ENCODE measurements at regions of chr10 and their contacts with region 1.

Region 1: GRCh38 chr10:7471720-7472367 is 61.0 kb upstream of the SFMBT2 start:
- DNase-seq: peak; percentile 99
- H3K4me3 ChIP-seq: peak overlapping the region; percentile 55
- H3K27ac ChIP-seq: peak overlapping the region; percentile 91
- H3K4me1 ChIP-seq: peaks cover 75% of the 10 kb centered on the region
- CTCF ChIP-seq: no peak

Region 2: DNA sequence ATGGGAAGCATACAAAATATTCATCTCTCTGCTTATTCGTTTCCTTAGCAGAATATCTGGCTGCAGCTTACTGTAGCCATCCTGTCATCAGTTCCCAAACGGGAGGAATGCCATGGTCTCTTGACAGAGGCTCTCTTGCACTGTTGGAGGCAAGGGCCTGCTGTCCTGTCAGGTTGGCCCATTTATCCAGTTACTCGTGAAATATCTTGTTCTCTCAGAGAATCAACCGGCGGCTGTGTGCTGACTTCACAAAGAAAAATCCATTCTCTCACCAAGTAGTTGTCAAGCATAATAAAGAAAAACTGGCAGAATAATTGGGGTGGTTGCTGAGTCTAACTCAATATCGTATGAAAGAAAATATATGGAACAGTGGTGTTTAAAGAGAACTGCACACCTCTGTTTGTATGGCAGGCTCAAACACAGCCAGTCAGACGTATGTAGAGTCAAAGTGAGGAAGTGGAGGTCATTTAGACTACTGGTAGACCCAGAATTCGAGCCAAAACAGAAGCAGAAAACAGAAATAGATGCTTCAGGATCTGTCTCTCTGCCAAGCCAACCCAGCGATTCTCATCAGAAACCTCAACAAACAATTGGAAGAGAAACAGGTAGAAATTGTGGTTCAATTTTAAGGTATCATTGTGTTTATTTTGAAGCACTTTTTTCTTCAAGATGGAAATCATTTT is 542.6 kb before region 1 on chr10:
- CTCF ChIA-PET with region 1: no interaction called
- POLR2A ChIA-PET with region 1: interaction called, 3 read pairs
- intact Hi-C with region 1: loop called (anchors 5 kb)
- DNase-seq: peak; percentile 63
- H3K4me3 ChIP-seq: peak overlapping the region; percentile 53
- H3K27ac ChIP-seq: peak overlapping the region; percentile 96
- H3K4me1 ChIP-seq: peaks cover 57% of the 10 kb centered on the region
- CTCF ChIP-seq: no peak

Region 3: GRCh38 chr10:6980353-6980752 is 491.5 kb before region 1 on chr10:
- CTCF ChIA-PET with region 1: no interaction called
- POLR2A ChIA-PET with region 1: no interaction called
- intact Hi-C with region 1: no loop called
- DNase-seq: peak; percentile 19
- H3K4me3 ChIP-seq: no peak overlapping the region
- H3K27ac ChIP-seq: no peak overlapping the region
- H3K4me1 ChIP-seq: peaks cover 4% of the 10 kb centered on the region
- CTCF ChIP-seq: no peak

Region 4: DNA sequence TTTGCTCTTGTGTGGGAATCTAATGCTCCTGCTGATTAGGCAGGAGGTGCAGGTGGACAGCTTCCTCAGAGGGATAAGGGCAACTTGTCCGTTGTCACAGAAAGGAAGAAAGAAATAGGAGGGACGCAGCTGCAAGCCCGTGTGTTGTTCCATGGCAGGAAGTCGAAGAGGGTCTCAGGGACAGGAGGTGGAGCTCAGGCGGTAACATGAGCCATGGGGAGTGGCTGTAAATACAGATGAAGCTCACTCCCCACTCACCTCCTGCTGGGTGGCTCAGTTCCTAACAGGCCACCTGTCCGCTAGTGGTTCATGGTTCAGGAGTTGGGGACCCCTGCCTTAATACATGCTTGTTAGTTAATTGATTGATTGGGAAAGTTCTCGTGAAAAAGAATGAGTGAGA is 40.6 kb after region 1 on chr10:
- CTCF ChIA-PET with region 1: no interaction called
- POLR2A ChIA-PET with region 1: no interaction called
- intact Hi-C with region 1: loop called (anchors 2 kb)
- DNase-seq: peak; percentile 78
- H3K4me3 ChIP-seq: peak overlapping the region; percentile 22
- H3K27ac ChIP-seq: peak overlapping the region; percentile 57
- H3K4me1 ChIP-seq: peaks cover 41% of the 10 kb centered on the region
- CTCF ChIP-seq: no peak